ENCODE measurements at regions of chr5 and their contacts with region 1.

Region 1: DNA sequence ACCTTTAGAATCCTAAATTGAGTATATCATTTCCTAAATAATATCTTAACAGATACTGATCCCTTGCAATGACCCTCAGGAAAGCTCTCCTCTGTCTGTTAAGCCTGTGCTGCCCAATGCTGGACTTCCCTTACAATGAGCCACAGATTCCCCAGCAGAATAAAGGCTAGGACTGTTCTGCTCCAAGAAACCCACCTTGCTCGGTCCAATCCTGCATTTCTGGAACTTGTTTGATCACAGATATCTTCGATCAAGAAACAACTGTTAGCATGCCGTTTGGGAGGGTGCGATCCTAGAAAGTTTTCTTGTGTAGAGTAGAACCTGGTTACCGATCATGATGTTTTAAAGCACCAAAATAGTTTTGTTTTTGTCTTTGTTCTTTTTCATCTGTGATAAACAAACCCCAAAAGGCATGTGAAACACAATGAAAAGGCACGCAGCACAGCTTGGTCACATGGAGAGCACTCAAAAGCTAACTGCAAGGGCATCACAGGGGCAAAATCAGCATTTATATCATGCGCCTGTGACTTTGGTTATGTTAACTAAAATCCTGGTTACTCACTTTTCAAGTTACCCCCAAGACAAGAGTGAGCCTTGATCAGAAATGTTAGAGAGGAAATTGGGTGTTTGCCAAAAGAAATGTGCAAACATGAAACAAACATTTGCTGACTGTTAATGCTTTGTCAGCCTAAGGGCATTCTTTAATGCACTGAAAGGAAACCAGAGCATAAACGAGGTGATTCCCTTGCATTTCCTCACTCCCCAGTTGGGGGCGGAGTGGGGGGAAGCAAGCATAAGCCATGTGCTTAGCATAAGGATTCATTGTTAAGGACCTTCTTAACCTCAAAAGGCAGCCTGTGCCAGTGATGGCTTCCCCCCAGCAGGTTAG is 61.9 kb upstream of the ADAMTS16 start:
- DNase-seq: no peak

Region 2: GRCh38 chr5:5103245-5103644 is 25.0 kb after region 1 on chr5:
- intact Hi-C with region 1: loop called in 1 of 2 experiments (anchors 1 kb)
- DNase-seq: no peak

Measured in posterior vena cava (tissue), 2 donors.